ENCODE measurements at regions of chr10 and their contacts with region 1.

Region 1: DNA sequence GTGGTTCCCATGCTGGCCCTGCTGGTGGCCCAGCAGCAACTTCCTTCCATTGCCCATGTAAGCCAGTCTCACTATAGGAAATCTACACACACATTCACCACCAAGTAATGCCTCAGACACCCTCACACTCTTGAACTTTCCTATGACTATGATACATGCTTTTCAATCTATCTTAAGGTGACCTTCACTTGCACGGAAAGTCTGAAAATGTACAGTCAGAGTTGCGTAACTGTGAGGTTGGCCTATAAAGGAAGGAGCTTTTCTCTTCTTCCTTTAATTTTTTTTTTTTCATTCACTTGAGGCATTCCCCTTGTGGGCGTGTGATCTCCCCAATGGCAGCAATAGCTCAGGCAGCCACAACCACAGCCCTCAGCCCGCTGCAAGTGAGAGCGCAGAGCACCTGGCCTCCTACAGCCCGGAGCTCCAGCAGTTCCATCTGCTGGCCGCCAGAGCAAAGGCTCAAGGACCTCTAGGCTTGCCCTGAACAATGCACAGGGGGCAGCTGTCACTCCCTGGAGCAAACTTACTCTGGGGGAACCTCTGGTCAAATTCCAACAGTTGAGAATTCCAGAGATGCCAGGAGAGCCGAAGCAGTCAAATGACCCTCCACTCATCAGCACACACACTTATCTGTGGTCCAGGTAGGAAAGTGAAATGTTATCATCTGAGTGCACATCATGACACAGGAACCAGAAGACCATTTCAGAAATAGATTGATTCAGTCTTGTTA is 123.1 kb upstream of the ADO start:
- DNase-seq: peak; percentile 88
- CTCF ChIP-seq: peak; percentile 76

Region 2: GRCh38 chr10:62405137-62405536 is 276.2 kb before region 1 on chr10:
- CTCF ChIA-PET with region 1: no interaction called
- POLR2A ChIA-PET with region 1: no interaction called
- DNase-seq: no peak
- CTCF ChIP-seq: no peak

Region 3: DNA sequence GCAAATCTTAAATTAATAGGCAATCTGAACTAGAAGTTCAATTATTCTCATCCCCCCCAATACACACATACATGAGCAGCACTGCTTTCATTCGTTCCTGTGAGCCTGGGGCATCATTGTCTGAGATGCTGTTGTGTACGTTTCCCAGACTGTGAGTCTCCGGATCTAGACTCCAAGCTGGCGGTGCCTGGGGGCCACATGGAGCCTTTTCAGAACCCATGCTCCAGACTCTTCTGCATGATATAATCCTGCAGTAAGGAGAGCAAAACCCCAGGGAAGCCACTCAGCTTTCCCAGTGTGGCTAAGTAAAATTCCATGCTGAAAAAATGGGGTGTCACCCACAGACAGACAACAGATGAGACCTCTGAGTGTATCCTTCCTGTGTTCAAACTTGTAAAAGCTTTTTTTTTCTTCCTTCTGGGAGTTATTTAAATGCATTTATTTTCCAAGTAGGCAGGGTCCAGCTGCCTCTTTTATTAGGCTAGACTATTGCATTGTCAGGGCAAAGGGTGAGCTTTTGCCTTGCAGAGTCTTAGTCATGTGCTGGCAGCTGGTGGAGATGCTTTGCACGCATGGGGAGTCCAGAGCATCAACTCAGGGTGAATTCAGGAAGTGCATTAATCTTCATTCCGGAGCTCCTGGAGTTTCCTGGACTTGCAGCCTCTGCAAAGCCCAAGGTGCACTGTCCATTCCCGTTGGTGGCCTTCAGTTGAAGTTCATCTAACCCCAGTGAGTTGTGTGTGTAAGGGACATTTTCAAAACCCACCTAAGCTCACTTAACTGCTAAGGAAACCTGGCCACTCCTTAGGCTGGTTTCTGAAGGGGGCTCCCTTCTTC is 62.6 kb before region 1 on chr10:
- CTCF ChIA-PET with region 1: interaction called, 12 read pairs
- POLR2A ChIA-PET with region 1: no interaction called
- DNase-seq: peak; percentile 38
- CTCF ChIP-seq: no peak

Region 4: GRCh38 chr10:62653254-62653653 is 28.1 kb before region 1 on chr10:
- CTCF ChIA-PET with region 1: interaction called, 14 read pairs
- POLR2A ChIA-PET with region 1: no interaction called
- DNase-seq: peak; percentile 68
- CTCF ChIP-seq: no peak

Region 5: GRCh38 chr10:62696798-62697197 is 15.4 kb after region 1 on chr10:
- CTCF ChIA-PET with region 1: interaction called, 10 read pairs
- POLR2A ChIA-PET with region 1: no interaction called
- DNase-seq: no peak
- CTCF ChIP-seq: no peak

Region 6: DNA sequence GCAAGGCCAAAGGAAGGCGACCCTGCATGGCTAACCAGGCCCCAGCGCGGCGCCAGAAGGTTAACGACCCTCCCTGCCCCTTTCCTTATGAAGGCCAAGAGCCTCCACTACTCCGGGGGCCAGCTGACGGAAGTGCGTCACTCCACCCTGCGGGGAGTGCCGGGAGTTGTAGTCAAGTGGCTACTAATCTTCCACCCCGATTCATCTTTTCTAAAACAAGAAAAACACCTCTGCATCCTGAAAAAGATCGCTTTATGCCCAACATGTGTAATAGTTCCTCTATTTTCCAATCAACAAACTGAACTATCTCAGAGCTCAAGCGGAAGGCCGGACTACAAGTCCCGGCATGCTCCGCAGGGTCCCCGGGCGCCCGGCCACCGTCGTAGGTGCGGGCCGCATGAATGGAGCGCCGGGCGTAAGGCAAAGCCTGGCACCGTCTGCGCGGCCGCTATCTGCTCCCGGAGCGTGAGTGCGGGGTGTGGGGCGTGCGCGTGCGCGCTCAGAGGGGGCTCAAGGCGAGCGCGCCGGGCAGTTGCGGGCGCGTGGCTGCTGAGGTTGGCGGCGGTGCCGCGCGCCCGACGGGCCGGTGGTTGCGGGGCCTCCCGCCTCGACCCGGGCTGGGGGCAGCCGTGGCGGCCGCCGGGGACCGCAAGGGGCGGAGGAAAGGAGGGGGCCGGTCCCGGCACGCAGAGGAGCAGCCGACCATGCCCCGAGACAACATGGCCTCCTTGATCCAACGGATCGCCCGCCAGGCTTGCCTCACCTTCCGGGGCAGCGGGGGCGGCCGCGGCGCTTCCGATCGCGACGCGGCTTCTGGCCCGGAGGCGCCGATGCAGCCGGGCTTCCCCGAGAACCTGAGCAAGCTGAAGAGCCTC is 123.2 kb after region 1 on chr10 and contains the start of gene ADO:
- CTCF ChIA-PET with region 1: interaction called, 11 read pairs
- POLR2A ChIA-PET with region 1: no interaction called
- DNase-seq: peak; percentile 87
- CTCF ChIP-seq: no peak

Measured in GM10248 (cell line).